H1 (cell line): ENCODE measurements at regions of chr1 and their contacts with region 1.

Region 1: GRCh38 chr1:43073490-43074230 is 98.4 kb downstream of the EBNA1BP2 start:
- DNase-seq: peak; percentile 59 to 84
- H3K4me3 ChIP-seq: no peak overlapping the region
- H3K27ac ChIP-seq: no peak overlapping the region
- H3K4me1 ChIP-seq: peaks cover 0 to 18% (median 13%) of the 10 kb centered on the region in 4 experiments; a peak in 6 of 7 replicates
- H3K27me3 ChIP-seq: no peaks in the 10 kb centered on the region
- CTCF ChIP-seq: peak; percentile 71 to 92 (median 86)
- EP300 ChIP-seq: no peak
- POLR2A ChIP-seq: no peak
- RAD21 ChIP-seq: peak; percentile 100

Region 2: GRCh38 chr1:42756956-42757891 is 316.4 kb before region 1 on chr1:
- CTCF ChIA-PET with region 1: interaction called, 10 read pairs
- POLR2A ChIA-PET with region 1: no interaction called
- DNase-seq: no peak
- H3K4me3 ChIP-seq: no peak overlapping the region
- H3K27ac ChIP-seq: no peak overlapping the region
- H3K4me1 ChIP-seq: no peaks in the 10 kb centered on the region
- H3K27me3 ChIP-seq: no peaks in the 10 kb centered on the region
- CTCF ChIP-seq: peak; percentile 34 to 75 (median 57)
- EP300 ChIP-seq: no peak
- POLR2A ChIP-seq: no peak
- RAD21 ChIP-seq: peak; percentile 51 to 61

Region 3: DNA sequence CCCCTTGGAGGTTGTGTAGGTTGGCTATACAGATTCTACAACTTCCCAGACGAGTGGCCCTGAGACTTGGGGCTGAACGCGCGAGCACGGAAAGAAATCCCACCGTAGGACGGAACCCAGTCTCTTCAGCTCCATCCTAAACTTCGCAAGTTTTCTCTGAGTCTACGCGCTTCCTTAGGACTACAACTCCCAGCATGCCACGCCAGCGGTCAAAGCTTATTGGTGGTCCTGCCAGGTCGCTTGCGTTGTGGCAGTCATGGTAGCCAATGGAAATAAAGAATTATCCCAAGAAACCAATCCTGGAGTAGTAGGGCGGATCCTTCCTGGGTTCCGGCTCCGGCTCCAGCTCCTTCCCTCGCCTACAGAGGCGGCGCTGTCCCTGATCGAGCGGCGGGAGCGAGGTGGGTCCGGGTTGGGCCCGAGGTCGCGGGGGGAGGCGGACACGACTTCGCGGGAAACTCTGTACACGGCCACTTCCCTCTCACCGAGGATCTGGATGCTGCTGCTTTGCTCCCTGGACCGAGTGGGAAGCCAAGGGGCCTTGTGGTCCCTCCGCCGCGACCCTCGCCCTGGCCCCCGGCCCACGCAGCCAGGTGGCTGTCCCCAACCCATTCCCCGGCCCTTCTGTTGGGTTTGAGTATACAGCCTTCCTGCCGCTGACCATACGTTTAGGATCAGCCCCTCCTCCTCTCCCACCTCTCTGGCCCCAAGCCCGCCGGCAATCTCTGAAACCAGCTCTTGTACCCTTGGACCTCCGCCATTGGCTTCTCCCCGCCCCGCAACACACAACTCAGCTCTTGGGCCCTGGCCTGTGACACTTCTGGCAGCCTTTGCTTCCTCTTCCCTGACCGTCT is 227.2 kb before region 1 on chr1 and contains the start of gene ZNF691:
- CTCF ChIA-PET with region 1: interaction called, 11 read pairs
- POLR2A ChIA-PET with region 1: interaction called, 5 read pairs
- DNase-seq: peak; percentile 84 to 86
- H3K4me3 ChIP-seq: peak within 1 kb of the TSS; percentile 79 to 82 (median 81)
- H3K27ac ChIP-seq: peak within 1 kb of the TSS; percentile 60; the same call in 1 of the 2 replicates
- H3K4me1 ChIP-seq: peaks cover 2 to 9% (median 5%) of the 10 kb centered on the region in 4 experiments; a peak in 6 of 7 replicates
- H3K27me3 ChIP-seq: no peaks in the 10 kb centered on the region
- CTCF ChIP-seq: peak; percentile 17 to 39 (median 39); a peak in 3 of 4 replicates
- EP300 ChIP-seq: no peak
- POLR2A ChIP-seq: peak; percentile 60 to 61
- RAD21 ChIP-seq: no peak
- total RNA-seq, gene ZNF691: 18.6 and 19.5 TPM in 2 replicates

Region 4: DNA sequence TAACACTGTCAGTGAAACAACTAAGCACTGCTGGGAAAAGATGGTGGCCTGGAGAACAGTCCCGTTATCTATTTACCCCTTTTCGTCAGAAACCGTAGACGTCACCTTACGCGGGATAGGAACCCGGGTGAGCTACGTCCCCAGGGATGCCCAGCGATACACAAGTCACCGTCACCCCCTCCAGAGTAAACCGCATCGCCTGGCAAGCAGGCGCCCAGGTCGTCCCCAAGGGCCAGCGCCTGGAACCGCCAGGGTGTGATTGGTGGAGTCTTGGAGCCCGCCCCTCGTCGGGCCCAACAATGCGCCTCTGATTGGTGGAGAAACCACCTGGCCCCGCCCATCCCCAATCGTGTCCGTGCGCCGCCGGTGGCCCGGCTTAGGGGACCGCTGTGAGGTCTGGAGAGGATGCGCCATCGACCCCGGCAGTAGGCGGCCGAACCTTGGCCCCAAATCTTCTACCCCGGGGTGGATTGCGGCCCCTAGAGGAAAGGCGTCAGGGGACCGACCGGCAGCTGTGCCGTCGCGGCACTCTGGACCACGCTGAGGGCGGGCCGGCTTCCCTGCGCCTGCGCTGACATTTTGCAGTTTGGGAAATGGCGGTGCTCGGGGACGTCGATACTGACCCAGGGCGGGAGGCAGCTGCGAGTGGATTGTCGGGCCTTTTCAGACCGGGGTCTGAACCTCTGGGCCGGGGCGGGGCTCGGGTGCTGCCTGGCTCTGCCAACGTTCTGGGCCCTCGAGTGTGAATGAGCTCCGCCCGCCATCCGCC is 149.4 kb before region 1 on chr1:
- CTCF ChIA-PET with region 1: interaction called, 136 read pairs
- POLR2A ChIA-PET with region 1: interaction called, 8 read pairs
- DNase-seq: peak; percentile 84 to 98
- H3K4me3 ChIP-seq: peak overlapping the region; percentile 54 to 74 (median 60)
- H3K27ac ChIP-seq: peak overlapping the region; percentile 81; the same call in 1 of the 2 replicates
- H3K4me1 ChIP-seq: peaks cover 4 to 10% (median 7%) of the 10 kb centered on the region in 4 experiments; a peak in 6 of 7 replicates
- H3K27me3 ChIP-seq: no peaks in the 10 kb centered on the region
- CTCF ChIP-seq: peak in 2 of 3 experiments; percentile 2 to 33; a peak in 2 of 4 replicates
- EP300 ChIP-seq: no peak
- POLR2A ChIP-seq: peak; percentile 73 to 93
- RAD21 ChIP-seq: peak in 1 of 2 experiments; percentile 7; a peak in 1 of 4 replicates

Region 5: GRCh38 chr1:42941640-42942330 is 131.9 kb before region 1 on chr1:
- CTCF ChIA-PET with region 1: interaction called, 48 read pairs
- POLR2A ChIA-PET with region 1: interaction called, 4 read pairs
- DNase-seq: no peak
- H3K4me3 ChIP-seq: no peak overlapping the region
- H3K27ac ChIP-seq: no peak overlapping the region
- H3K4me1 ChIP-seq: peaks cover 5 to 31% (median 15%) of the 10 kb centered on the region in 4 experiments
- H3K27me3 ChIP-seq: no peaks in the 10 kb centered on the region
- CTCF ChIP-seq: no peak
- EP300 ChIP-seq: no peak
- POLR2A ChIP-seq: no peak
- RAD21 ChIP-seq: no peak

Region 6: DNA sequence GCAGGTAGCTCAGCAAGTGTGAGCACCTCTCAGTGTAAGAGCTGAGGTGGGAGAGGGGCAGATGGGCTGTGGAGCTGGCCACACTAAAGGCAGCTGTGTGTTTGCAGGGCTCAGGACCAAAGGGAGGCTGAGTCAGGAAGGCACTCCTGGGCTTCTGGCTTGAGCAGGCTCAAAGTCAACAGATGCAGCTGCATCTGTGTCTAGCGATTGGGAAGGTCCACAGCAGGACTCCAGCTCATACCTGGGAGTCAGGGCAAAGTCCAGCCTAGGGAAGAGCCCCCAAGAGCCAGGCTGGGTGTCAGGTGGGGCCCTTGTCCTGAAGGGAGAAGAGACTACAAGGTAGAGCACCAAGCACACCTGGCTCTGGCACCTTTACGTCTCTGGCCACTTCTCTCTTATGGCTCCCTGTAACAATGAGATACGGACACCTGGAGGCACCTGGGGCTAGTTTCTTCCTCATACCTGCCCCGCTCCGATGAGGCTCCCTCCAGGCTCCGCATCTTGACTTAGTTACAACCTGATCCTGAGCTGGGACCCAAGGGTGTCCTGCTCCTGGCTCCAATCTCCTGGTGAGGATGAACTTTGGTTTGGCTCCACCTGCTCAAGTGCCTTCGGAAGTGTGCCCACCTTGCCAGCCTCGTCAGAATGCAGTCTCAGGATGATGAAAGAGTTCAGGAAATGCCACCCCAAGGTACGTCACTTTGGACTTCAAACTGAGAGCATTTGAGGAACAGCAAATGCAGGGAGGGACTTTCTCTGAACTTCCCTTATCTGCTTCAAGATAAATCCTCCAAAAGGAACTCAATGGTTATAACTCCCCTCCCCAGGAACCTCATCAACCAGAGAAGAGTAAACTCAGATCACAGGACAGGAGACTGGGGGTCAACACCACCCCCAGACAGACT is 93.5 kb before region 1 on chr1:
- CTCF ChIA-PET with region 1: interaction called, 12 read pairs
- POLR2A ChIA-PET with region 1: interaction called, 3 read pairs
- DNase-seq: no peak
- H3K4me3 ChIP-seq: no peak overlapping the region
- H3K27ac ChIP-seq: no peak overlapping the region
- H3K4me1 ChIP-seq: peaks cover 6 to 16% (median 12%) of the 10 kb centered on the region in 4 experiments
- H3K27me3 ChIP-seq: no peaks in the 10 kb centered on the region
- CTCF ChIP-seq: no peak
- EP300 ChIP-seq: no peak
- POLR2A ChIP-seq: no peak
- RAD21 ChIP-seq: no peak